ACHN (cell line): ENCODE measurements at regions of chr11 and their contacts with region 1.

Region 1: GRCh38 chr11:72752088-72752914 is at the start of gene ARAP1:
- DNase-seq: peak; percentile 86

Region 2: GRCh38 chr11:72814286-72815109 is 62.2 kb after region 1 on chr11 and contains the start of gene ATG16L2:
- in situ Hi-C with region 1: loop called (anchors 10 kb)
- DNase-seq: peak; percentile 83

Region 3: DNA sequence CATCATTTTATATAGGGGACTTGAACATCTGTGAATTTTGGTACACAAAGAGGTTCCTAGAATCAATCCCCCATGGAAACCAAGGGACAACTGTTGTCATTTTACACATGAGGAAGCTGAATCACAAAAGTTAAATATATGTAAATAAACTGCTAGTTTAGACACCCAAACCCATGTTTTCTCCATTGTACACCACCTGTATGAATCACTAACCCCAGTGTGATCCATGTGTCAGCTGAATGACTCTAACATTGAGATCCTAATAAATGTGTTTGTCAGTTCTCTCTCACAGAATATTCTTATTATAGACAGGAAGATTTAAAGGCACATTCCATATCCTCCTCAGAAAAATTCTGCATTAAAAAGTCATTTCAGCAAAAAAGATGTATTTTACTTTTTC is 145.2 kb after region 1 on chr11:
- in situ Hi-C with region 1: no loop called
- DNase-seq: no peak

Region 4: GRCh38 chr11:73072901-73073481 is 320.7 kb after region 1 on chr11:
- in situ Hi-C with region 1: no loop called
- DNase-seq: peak; percentile 5